ENCODE measurements at regions of chr13 and their contacts with region 1.

Region 1: DNA sequence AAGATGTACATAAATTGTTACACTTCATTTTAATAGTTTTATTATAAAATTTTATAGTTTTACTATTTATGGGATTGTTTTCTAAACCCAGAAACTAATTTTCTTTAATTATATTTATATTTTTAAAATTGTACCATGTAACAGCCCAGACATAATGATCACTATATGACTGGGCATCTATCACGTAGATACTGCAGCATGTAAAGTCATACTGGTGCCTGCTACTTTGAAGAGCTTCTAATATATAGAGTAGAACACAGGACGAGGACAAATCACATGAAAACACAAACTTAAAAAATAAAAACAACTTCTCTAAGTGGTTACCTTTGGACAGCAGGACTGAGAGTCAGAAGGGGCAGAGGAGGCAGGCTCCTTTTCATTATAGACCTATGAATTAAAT is 5.3 kb downstream of the ELF1 start:
- DNase-seq: no peak
- ATAC-seq: no peak

Region 2: DNA sequence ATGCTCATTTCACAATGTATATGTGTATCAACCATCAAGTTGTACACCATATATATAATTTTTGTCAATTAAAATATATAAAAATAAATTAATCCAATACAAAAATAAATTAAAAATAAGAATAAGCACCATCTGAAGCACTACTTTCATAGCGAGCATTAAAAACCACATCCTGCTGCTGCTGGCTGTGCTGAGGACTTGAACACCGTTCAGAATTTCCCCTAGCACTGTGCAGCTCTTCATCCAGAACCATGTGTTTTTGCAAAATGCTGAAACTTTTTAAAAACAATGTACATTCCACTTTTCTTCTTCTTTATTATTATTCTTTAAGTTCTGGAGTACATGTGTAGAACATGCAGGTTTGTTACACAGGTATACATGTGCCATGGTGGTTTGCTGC is 307.4 kb before region 1 on chr13:
- intact Hi-C with region 1: no loop called
- DNase-seq: no peak
- ATAC-seq: no peak

Region 3: DNA sequence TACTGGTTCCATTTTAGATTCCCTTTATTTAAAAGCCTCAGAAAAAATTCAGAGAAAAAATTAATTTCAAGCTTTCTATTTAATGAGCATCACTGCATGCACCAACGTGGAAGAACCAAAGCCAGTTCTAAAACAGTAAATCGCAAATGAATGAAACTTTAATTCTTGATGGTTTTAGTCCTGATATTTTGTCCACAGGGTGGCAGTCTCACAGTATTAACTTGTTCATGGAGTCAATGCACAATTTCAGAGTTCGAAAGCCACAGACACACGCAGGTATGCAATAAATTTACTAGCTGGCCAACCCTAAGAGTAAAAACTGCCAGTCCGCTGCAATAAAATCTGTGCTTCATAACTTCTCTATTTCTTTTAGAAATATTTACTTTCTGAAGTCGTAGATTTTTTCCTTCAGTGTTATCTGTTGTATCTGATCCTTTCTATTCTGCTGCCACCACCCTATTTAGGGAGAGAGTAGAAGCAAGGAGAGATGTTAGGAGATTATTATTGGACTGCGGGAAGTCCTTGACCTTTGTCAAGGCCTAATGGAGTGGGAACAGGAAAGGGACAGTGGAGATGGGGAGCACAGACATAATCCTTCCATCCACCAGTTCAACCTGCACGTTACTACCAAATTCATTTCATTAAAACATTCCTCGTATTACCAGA is 40.5 kb after region 1 on chr13:
- intact Hi-C with region 1: loop called (anchors 5 kb)
- DNase-seq: no peak
- ATAC-seq: peak; percentile 42

Measured in left ventricle myocardium superior (tissue), 1 donor.